ENCODE measurements at regions of chr10 and their contacts with region 1.

Region 1: GRCh38 chr10:93080350-93081046 is 6.8 kb downstream of the CYP26A1 start:
- DNase-seq: no peak
- ATAC-seq: no peak
- H3K4me3 ChIP-seq: no peak overlapping the region
- H3K27ac ChIP-seq: no peak overlapping the region
- H3K4me1 ChIP-seq: no peaks in the 10 kb centered on the region
- H3K27me3 ChIP-seq: peaks cover 28 to 35% (median 33%) of the 10 kb centered on the region in 3 donors
- CTCF ChIP-seq: peak; percentile 27 to 72 (median 51)
- POLR2A ChIP-seq: no peak

Region 2: GRCh38 chr10:92395271-92395670 is 685.2 kb before region 1 on chr10:
- in situ Hi-C with region 1: no loop called
- intact Hi-C with region 1: no loop called
- DNase-seq: no peak
- ATAC-seq: no peak
- H3K4me3 ChIP-seq: no peak overlapping the region
- H3K27ac ChIP-seq: no peak overlapping the region
- H3K4me1 ChIP-seq: no peaks in the 10 kb centered on the region
- H3K27me3 ChIP-seq: no peaks in the 10 kb centered on the region
- CTCF ChIP-seq: no peak
- POLR2A ChIP-seq: no peak

Region 3: GRCh38 chr10:92993699-92994272 is 86.7 kb before region 1 on chr10:
- in situ Hi-C with region 1: no loop called
- intact Hi-C with region 1: no loop called
- DNase-seq: no peak
- ATAC-seq: no peak
- H3K4me3 ChIP-seq: no peak overlapping the region
- H3K27ac ChIP-seq: no peak overlapping the region
- H3K4me1 ChIP-seq: no peaks in the 10 kb centered on the region
- H3K27me3 ChIP-seq: no peaks in the 10 kb centered on the region
- CTCF ChIP-seq: no peak
- POLR2A ChIP-seq: no peak

Region 4: GRCh38 chr10:93015722-93016121 is 64.8 kb before region 1 on chr10:
- in situ Hi-C with region 1: no loop called
- intact Hi-C with region 1: no loop called
- DNase-seq: no peak
- ATAC-seq: no peak
- H3K4me3 ChIP-seq: no peak overlapping the region
- H3K27ac ChIP-seq: no peak overlapping the region
- H3K4me1 ChIP-seq: no peaks in the 10 kb centered on the region
- H3K27me3 ChIP-seq: no peaks in the 10 kb centered on the region
- CTCF ChIP-seq: no peak
- POLR2A ChIP-seq: no peak

Region 5: GRCh38 chr10:93503075-93503474 is 422.6 kb after region 1 on chr10:
- in situ Hi-C with region 1: loop called in 1 of 4 experiments (anchors 25 kb)
- intact Hi-C with region 1: no loop called
- DNase-seq: no peak
- ATAC-seq: no peak
- H3K4me3 ChIP-seq: no peak overlapping the region
- H3K27ac ChIP-seq: no peak overlapping the region
- H3K4me1 ChIP-seq: no peaks in the 10 kb centered on the region
- H3K27me3 ChIP-seq: no peaks in the 10 kb centered on the region
- CTCF ChIP-seq: no peak
- POLR2A ChIP-seq: no peak

Measured in gastrocnemius medialis (tissue), 4 donors.